Right cardiac atrium (tissue), 5 donors: ENCODE measurements at regions of chr13 and their contacts with region 1.

Region 1: DNA sequence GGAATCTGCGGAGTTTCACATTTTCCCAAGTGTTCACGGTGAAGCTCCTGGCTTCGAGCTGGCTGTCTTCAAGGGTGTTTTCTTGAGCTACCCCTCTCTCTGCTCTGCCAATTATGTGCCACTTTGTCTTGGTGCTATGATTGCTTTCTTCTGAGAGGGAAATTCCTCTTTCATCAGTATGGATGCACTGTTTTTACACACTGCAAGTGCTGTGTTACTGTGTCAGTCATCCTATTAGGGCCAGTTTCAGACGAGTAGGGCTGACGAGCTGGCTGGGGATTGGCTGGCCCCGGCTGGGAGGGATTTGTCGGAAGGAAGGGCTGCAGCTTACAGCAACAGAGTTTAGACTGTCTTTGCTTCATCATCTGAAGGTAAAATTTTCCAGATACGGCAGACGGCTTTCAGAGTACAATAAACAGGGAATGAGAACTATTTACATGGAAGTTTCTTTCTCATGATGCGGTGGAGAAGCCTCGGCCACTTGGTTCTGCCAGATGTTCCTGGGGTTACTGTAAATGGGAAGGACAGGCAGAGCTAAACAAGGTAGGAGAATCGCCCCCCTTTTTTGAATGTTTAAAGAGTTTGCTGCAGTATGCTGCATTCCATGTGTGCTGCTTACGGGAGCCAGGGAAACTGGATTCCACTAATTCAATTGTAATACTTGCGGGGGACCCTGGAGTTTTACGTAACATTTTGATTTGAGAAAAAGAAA is at the start of gene MBNL2:
- DNase-seq: peak; percentile 89 to 94 (median 94)
- ATAC-seq: peak; percentile 97 to 98
- H3K4me3 ChIP-seq: peak within 1 kb of the TSS; percentile 99
- H3K27ac ChIP-seq: peak within 1 kb of the TSS; percentile 98
- H3K4me1 ChIP-seq: peaks cover 10% of the 10 kb centered on the region
- H3K27me3 ChIP-seq: no peaks in the 10 kb centered on the region
- total RNA-seq, gene MBNL2: 71.8 to 89.6 (median 76.2) TPM

Region 2: DNA sequence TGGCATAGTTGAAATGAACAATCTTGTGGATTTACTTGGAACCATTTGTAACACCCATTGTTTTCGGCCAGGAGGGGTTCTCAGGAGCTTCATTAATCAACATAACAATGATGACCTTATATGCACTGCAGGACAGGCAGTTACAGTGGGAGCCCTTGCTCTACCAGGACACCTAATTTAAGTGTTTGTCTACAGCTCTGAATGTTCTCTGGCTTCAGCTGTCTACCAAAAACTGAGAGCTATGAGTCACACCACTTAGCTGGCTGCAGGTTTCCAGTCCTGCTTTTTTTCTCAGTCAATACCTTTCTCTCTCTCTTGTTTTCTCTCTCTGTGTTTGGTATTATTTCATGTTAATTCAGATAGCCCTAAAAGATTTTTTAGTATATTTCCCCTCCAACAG is 105.4 kb before region 1 on chr13:
- intact Hi-C with region 1: loop called in 2 of 4 experiments (anchors 5 kb)
- DNase-seq: no peak
- ATAC-seq: peak; percentile 80 to 81
- H3K4me3 ChIP-seq: no peak overlapping the region
- H3K27ac ChIP-seq: peak overlapping the region; percentile 14
- H3K4me1 ChIP-seq: peaks cover 21% of the 10 kb centered on the region
- H3K27me3 ChIP-seq: no peaks in the 10 kb centered on the region

Region 3: DNA sequence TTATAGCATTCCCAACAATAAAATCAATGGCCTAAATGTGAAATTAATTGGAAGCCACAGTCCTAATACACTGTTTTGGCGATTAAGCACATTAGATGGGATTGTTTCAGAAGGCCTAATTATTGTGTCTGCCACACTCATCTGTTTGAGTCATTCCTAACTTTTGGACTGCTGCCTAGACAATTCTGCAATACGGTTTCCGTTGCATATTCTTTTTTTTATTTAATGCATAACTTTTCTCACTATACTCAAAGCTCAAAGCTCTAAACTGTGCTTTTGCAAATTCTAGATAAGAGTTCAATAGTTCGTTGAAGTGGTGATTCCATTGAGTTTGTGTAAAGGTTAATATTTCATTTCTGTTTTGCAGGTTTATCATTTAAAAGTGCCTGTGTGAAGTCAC is 53.1 kb after region 1 on chr13:
- intact Hi-C with region 1: loop called in 1 of 4 experiments (anchors 10 kb)
- DNase-seq: no peak
- ATAC-seq: peak; percentile 27 to 56
- H3K4me3 ChIP-seq: no peak overlapping the region
- H3K27ac ChIP-seq: no peak overlapping the region
- H3K4me1 ChIP-seq: peaks cover 13% of the 10 kb centered on the region
- H3K27me3 ChIP-seq: no peaks in the 10 kb centered on the region

Region 4: DNA sequence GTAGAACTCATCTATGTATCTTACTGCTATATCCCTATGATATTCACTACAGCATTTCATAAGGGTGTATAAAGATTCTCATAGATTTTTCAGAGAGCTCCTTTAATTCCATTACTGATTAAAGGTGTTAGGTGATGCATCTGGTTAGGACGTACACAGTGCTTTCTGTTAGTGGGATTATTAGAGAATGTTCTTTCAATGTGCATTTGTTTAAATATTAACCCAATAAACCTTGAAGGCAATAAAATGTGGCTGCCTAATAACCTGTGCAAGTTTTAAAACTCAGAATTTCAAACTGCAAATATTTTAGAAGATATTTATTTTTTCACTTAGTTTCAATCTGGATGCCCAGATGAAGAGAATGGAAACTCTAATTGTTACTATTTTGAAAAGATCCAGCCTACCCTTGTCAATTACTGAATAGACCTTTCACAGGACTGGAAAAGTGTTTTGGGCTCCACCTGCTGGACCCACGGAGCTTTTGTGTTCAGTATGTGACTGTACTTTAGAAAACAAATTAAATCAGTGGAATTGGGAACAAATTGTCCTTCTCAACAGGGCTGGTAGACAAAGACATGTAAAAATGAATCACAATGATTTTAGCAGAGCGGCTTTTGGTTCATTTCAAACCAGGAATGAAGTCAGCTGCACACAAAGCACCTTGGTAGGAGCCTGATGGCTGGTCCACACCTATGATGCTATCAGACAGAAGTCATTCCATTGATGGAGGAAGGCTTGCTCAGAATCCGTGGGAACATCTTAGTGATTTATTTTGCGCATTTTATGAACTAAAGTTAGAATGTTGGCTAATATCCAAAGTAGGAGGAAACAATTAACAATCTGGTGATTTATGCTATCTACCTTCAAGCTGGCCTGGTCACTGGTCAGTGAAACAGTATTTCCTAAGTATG is 122.4 kb after region 1 on chr13:
- intact Hi-C with region 1: loop called in 3 of 4 experiments (anchors 5 kb)
- DNase-seq: peak; percentile 61 to 85 (median 79)
- ATAC-seq: peak; percentile 80 to 84
- H3K4me3 ChIP-seq: no peak overlapping the region
- H3K27ac ChIP-seq: no peak overlapping the region
- H3K4me1 ChIP-seq: peaks cover 2% of the 10 kb centered on the region
- H3K27me3 ChIP-seq: no peaks in the 10 kb centered on the region

Region 5: GRCh38 chr13:97359181-97360057 is 137.3 kb after region 1 on chr13:
- intact Hi-C with region 1: loop called in 1 of 4 experiments (anchors 5 kb)
- DNase-seq: no peak
- ATAC-seq: peak; percentile 87 to 89
- H3K4me3 ChIP-seq: no peak overlapping the region
- H3K27ac ChIP-seq: no peak overlapping the region
- H3K4me1 ChIP-seq: peaks cover 9% of the 10 kb centered on the region
- H3K27me3 ChIP-seq: no peaks in the 10 kb centered on the region